CD4-positive, alpha-beta memory T cell (primary cell): ENCODE measurements at regions of chr10 and their contacts with region 1.

Region 1: GRCh38 chr10:29446327-29446726 is 157.5 kb downstream of the LYZL1 start:
- DNase-seq: no peak
- H3K4me3 ChIP-seq: no peak overlapping the region
- H3K4me3 Mint-ChIP-seq: no peak overlapping the region
- H3K27ac ChIP-seq: no peak overlapping the region
- H3K27ac Mint-ChIP-seq: no peak overlapping the region
- H3K4me1 ChIP-seq: no peaks in the 10 kb centered on the region
- H3K4me1 Mint-ChIP-seq: peaks cover 7 to 13% (median 8%) of the 10 kb centered on the region in 4 donors
- H3K27me3 ChIP-seq: no peaks in the 10 kb centered on the region
- H3K27me3 Mint-ChIP-seq: no peaks in the 10 kb centered on the region

Region 2: GRCh38 chr10:29377333-29377961 is 68.9 kb before region 1 on chr10:
- CTCF ChIA-PET with region 1: interaction called, 8 read pairs
- POLR2A ChIA-PET with region 1: no interaction called
- intact Hi-C with region 1: loop called (anchors 2 kb)
- DNase-seq: peak in 2 of 5 donors; percentile 9 to 24
- H3K4me3 ChIP-seq: no peak overlapping the region
- H3K4me3 Mint-ChIP-seq: no peak overlapping the region
- H3K27ac ChIP-seq: no peak overlapping the region
- H3K27ac Mint-ChIP-seq: no peak overlapping the region
- H3K4me1 ChIP-seq: no peaks in the 10 kb centered on the region
- H3K4me1 Mint-ChIP-seq: peaks cover 0 to 3% (median 1%) of the 10 kb centered on the region in 4 donors
- H3K27me3 ChIP-seq: no peaks in the 10 kb centered on the region
- H3K27me3 Mint-ChIP-seq: peaks cover 3% of the 10 kb centered on the region in 2 donors

Region 3: GRCh38 chr10:29386342-29386999 is 59.9 kb before region 1 on chr10:
- CTCF ChIA-PET with region 1: interaction called, 18 read pairs
- POLR2A ChIA-PET with region 1: no interaction called
- intact Hi-C with region 1: loop called (anchors 2 kb)
- DNase-seq: peak; percentile 25 to 43 (median 37)
- H3K4me3 ChIP-seq: no peak overlapping the region
- H3K4me3 Mint-ChIP-seq: no peak overlapping the region
- H3K27ac ChIP-seq: no peak overlapping the region
- H3K27ac Mint-ChIP-seq: no peak overlapping the region
- H3K4me1 ChIP-seq: no peaks in the 10 kb centered on the region
- H3K4me1 Mint-ChIP-seq: peaks cover 0 to 3% (median 2%) of the 10 kb centered on the region in 4 donors
- H3K27me3 ChIP-seq: no peaks in the 10 kb centered on the region
- H3K27me3 Mint-ChIP-seq: peaks cover 2 to 8% of the 10 kb centered on the region in 2 donors

Region 4: DNA sequence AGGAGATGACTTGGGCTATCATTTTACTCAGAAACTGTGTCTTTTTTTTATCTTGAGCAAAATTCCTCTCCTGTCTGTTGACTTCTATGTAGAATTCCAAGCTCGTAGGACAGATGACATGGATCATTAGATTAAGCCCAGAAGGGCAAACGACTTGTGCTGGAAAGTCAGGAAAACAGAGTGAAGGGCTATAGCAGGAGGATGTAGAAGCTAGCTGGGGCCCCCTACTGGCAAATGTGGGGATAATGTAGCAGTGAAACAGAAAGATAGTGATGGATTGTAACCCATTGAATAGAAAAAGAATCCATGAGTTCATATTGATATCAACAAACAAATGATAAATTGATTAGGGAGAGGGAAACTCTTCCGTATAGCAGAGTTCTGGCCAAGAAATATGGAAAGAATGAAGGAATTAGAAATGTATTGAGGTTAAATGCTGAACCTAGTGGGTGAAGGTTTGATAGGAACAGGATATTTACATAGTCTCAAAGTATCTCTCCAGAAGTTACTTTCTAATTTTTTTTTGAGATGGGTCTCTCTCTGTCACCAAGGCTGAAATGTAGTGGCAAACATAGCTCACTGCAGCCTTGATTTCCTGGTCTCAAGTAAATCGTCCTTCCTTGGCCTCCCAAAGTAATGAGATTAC is 53.8 kb before region 1 on chr10:
- CTCF ChIA-PET with region 1: interaction called, 13 read pairs
- POLR2A ChIA-PET with region 1: no interaction called
- intact Hi-C with region 1: loop called (anchors 2 kb)
- DNase-seq: peak in 3 of 5 donors; percentile 15 to 24 (median 18)
- H3K4me3 ChIP-seq: no peak overlapping the region
- H3K4me3 Mint-ChIP-seq: no peak overlapping the region
- H3K27ac ChIP-seq: no peak overlapping the region
- H3K27ac Mint-ChIP-seq: no peak overlapping the region
- H3K4me1 ChIP-seq: no peaks in the 10 kb centered on the region
- H3K4me1 Mint-ChIP-seq: peaks cover 0 to 4% (median 0%) of the 10 kb centered on the region in 4 donors
- H3K27me3 ChIP-seq: no peaks in the 10 kb centered on the region
- H3K27me3 Mint-ChIP-seq: peaks cover 8 to 11% of the 10 kb centered on the region in 2 donors

Region 5: DNA sequence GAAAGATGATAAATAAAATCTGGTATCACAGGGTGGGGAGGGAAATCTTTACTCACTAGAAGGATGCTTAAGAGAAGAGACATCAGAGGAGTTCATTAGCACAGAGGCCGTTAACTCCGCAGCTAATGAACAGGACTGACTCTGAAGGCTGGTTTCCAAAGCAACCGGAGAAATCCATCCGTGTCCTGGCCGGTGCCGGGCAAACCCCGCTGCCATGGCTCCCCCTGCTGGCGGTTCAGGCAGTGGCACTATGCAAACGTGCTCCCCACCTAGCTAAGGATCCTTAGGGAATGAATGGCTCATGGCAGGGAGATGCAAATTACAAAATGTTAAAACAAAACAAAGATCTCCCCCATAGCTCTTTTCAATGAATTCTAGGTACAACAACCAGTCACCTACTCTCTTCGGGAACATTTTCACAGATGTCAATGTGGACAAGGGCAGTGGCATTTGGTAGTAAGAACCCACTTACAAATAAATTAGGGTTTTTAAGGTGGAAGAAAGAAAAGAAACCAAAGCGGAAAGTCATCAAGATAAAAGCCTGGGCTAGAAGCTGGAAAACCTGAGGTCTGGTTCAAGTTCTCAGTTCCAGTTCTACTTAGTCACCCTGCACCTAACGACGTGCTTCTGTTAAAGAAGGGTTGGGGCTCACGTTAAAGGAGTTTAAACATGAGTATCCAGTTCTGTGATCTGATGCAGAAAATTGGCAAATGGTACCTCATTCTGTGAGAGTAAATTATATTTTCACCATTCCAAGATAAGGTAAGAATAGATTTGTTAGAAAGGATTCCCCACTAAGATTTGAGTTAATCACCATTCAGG is 50.2 kb after region 1 on chr10:
- CTCF ChIA-PET with region 1: interaction called, 11 read pairs
- POLR2A ChIA-PET with region 1: no interaction called
- intact Hi-C with region 1: no loop called
- DNase-seq: peak in 4 of 5 donors; percentile 26 to 39 (median 28)
- H3K4me3 ChIP-seq: no peak overlapping the region
- H3K4me3 Mint-ChIP-seq: no peak overlapping the region
- H3K27ac ChIP-seq: no peak overlapping the region
- H3K27ac Mint-ChIP-seq: peak overlapping the region in 1 of 7 donors; percentile 36
- H3K4me1 ChIP-seq: no peaks in the 10 kb centered on the region
- H3K4me1 Mint-ChIP-seq: peaks cover 0 to 10% (median 5%) of the 10 kb centered on the region in 4 donors
- H3K27me3 ChIP-seq: no peaks in the 10 kb centered on the region
- H3K27me3 Mint-ChIP-seq: no peaks in the 10 kb centered on the region

Region 6: GRCh38 chr10:29897999-29898716 is 451.8 kb after region 1 on chr10:
- CTCF ChIA-PET with region 1: no interaction called
- POLR2A ChIA-PET with region 1: no interaction called
- intact Hi-C with region 1: no loop called
- DNase-seq: no peak
- H3K4me3 ChIP-seq: no peak overlapping the region
- H3K4me3 Mint-ChIP-seq: no peak overlapping the region
- H3K27ac ChIP-seq: no peak overlapping the region
- H3K27ac Mint-ChIP-seq: no peak overlapping the region
- H3K4me1 ChIP-seq: no peaks in the 10 kb centered on the region
- H3K4me1 Mint-ChIP-seq: no peaks in the 10 kb centered on the region
- H3K27me3 ChIP-seq: peaks cover 5% of the 10 kb centered on the region
- H3K27me3 Mint-ChIP-seq: peaks cover 5 to 21% of the 10 kb centered on the region in 2 donors